WTC11 (cell line): ENCODE measurements at regions of chr2 and their contacts with region 1.

Region 1: DNA sequence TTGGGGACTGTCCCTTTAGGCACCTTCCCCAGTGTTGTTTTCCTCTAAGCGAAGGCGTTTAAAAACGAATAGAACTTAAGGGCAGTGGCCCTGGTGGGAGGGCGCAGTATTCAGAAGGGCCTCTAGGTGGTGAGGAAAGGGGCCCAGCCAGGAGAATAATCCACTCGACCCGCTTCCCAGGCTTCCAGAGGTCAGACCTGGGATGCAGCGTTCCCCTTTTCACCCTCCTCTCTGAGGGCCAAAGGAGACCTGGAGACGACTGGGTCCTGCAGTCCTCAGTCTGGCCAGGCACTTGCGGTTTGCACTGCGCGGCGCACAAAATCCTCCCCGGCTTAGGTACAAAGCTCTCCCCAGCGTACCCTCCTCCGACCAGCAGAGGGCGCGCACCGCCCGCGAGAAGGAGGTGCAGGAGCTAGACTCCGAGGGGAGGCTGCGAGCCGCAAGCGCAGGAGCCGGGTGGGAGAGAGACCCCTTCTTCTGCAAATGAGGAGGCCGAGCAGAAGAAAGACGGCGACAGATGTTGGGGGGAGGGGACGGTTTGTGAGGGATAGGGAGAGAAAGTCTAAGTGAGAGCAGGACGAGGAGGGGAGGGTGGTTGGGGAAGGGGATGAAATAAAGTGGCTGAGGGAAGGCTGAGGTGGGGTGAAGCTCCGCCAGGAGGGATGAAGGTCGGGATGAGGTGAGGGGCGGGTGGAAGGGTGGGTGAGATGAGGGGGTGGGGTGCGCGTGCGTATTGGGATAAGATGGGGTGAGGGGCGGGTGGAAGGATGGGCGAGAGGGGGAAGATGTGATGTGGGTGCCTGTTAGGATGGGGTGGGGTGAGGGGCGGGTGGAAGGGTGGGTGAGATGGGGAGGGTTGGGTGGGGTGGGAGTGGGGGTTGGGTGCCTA is 4.9 kb downstream of the FEV start:
- DNase-seq: peak; percentile 96
- ATAC-seq: peak; percentile 80
- H3K4me3 Mint-ChIP-seq: peak overlapping the region; percentile 60
- H3K27ac Mint-ChIP-seq: no peak overlapping the region
- H3K4me1 Mint-ChIP-seq: peaks cover 25% of the 10 kb centered on the region
- H3K27me3 Mint-ChIP-seq: peaks cover 99% of the 10 kb centered on the region
- CTCF ChIP-seq: peak; percentile 74; the same call in 1 of the 2 replicates

Region 2: GRCh38 chr2:218852911-218853667 is 127.0 kb before region 1 on chr2:
- CTCF ChIA-PET with region 1: interaction called, 13 read pairs
- POLR2A ChIA-PET with region 1: no interaction called
- DNase-seq: peak; percentile 83
- ATAC-seq: peak; percentile 80
- H3K4me3 Mint-ChIP-seq: no peak overlapping the region
- H3K27ac Mint-ChIP-seq: no peak overlapping the region
- H3K4me1 Mint-ChIP-seq: peaks cover 37% of the 10 kb centered on the region
- H3K27me3 Mint-ChIP-seq: peaks cover 60% of the 10 kb centered on the region
- CTCF ChIP-seq: peak; percentile 87

Region 3: DNA sequence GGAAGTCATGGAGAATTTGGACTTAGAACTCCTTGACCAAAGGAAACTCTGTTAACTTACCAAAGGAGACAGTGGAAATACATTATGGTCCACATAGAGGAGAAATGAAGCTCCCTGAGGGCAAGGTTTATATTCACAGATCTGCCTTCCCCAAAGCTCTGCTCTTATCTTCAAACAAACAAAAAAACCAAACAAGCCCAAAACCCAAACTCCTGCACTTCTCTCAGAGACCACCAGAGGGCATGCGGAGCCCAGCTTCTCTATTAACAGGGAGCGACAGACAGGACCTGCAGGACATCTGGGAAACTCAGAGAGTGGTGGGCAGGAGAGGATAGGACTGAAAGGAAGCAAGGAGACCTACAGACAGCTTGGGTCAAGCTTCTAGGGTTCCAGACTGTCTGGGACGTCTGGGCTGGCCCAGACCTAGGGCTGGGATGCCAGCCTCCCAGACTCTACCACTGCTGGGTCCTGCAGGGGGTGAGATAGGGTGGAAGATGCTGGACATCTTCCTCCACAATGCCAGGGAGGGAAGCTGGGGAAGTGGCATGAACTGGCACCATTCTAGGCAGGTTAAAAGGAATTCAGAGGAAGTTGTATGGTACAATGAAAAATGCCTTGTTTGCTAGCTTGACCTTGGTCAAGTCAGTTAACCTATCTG is 103.4 kb before region 1 on chr2:
- CTCF ChIA-PET with region 1: interaction called, 98 read pairs
- POLR2A ChIA-PET with region 1: no interaction called
- DNase-seq: peak; percentile 81
- ATAC-seq: peak; percentile 18
- H3K4me3 Mint-ChIP-seq: no peak overlapping the region
- H3K27ac Mint-ChIP-seq: no peak overlapping the region
- H3K4me1 Mint-ChIP-seq: peaks cover 33% of the 10 kb centered on the region
- H3K27me3 Mint-ChIP-seq: peaks cover 97% of the 10 kb centered on the region
- CTCF ChIP-seq: peak; percentile 88

Region 4: DNA sequence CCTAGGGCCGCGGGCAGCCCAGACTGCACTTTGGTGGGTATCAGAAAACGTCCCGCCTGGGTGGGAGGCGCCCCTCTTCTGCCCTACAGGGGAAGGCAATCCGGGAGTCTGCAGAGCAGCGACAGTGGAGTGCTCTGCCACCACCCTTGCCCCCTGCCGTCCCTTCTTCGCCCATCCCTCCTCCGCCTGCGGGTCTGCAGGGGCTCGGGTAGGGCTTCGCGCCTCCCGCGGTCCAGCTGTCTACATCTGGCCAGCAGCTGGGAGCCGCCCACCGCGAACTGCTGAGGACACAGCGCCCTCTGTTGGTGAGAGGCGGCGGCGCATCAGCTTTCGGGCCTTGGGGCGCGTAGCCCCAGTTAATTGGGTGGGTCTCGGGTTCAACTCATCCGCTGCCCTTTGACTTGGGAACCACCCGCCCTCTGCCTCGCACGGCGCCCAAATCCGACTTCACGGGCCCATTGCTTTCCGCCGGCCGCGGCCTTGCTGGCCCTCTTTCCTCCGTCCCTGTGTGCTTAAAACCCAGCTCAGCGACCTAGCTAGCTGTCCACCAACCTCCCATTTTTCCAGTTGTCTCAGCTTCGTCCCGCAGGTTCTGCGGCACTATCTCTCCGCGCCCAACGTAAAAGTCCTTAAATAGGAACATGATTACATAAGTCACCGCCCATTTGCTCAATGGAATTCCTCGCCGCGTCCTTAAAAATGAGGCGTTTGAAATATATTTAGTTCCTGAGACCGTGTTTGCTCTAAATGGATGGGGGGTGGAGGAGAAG is 81.8 kb before region 1 on chr2:
- CTCF ChIA-PET with region 1: interaction called, 76 read pairs
- POLR2A ChIA-PET with region 1: no interaction called
- DNase-seq: peak; percentile 94
- ATAC-seq: peak; percentile 72
- H3K4me3 Mint-ChIP-seq: peak overlapping the region; percentile 49
- H3K27ac Mint-ChIP-seq: no peak overlapping the region
- H3K4me1 Mint-ChIP-seq: peaks cover 24% of the 10 kb centered on the region
- H3K27me3 Mint-ChIP-seq: peaks cover 99% of the 10 kb centered on the region
- CTCF ChIP-seq: peak; percentile 98

Region 5: DNA sequence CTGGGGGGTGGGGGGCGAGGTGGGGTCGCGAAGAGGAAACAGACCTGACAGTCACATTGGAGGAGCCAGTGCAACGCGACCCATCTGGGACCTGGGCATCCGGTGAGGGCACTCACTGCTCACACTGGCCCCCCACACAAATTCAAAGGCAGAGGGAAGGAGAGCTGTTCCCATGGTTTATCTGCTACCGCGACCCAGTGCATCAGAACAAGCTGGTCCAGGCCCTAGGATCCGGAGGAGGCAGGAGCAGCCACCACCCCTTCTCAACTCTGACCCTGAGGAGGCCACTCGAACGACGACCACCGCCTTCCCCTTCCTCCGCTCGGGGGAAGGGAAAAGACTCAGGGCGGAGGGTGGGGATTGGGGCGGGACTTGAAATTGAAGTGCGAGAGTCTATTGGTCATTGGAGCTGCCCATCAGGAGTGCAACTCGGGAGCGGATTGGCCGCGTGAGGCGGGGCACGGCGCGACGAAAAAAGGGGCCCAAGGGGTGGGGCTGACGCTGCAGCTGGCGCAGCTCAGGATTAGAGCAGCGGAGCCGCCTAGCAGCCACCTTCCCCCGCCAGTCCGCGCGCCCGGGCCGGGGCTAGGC is 20.9 kb before region 1 on chr2 and contains the start of gene CDK5R2:
- CTCF ChIA-PET with region 1: interaction called, 116 read pairs
- POLR2A ChIA-PET with region 1: no interaction called
- DNase-seq: peak; percentile 96
- ATAC-seq: peak; percentile 82
- H3K4me3 Mint-ChIP-seq: peak within 1 kb of the TSS; percentile 84
- H3K27ac Mint-ChIP-seq: no peak within 1 kb of the TSS
- H3K4me1 Mint-ChIP-seq: peaks cover 27% of the 10 kb centered on the region
- H3K27me3 Mint-ChIP-seq: peaks cover 95% of the 10 kb centered on the region
- CTCF ChIP-seq: no peak
- total RNA-seq, gene CDK5R2: 0.16 to 0.46 TPM (median 0.26 TPM) in 3 replicates

Region 6: GRCh38 chr2:219057709-219058540 is 77.8 kb after region 1 on chr2:
- CTCF ChIA-PET with region 1: interaction called, 35 read pairs
- POLR2A ChIA-PET with region 1: no interaction called
- DNase-seq: peak; percentile 91
- ATAC-seq: peak; percentile 82
- H3K4me3 Mint-ChIP-seq: peak overlapping the region; percentile 58
- H3K27ac Mint-ChIP-seq: no peak overlapping the region
- H3K4me1 Mint-ChIP-seq: peaks cover 25% of the 10 kb centered on the region
- H3K27me3 Mint-ChIP-seq: peaks cover 96% of the 10 kb centered on the region
- CTCF ChIP-seq: peak; percentile 80

Region 7: GRCh38 chr2:219155054-219155644 is 175.1 kb after region 1 on chr2:
- CTCF ChIA-PET with region 1: interaction called, 21 read pairs
- POLR2A ChIA-PET with region 1: no interaction called
- DNase-seq: peak; percentile 24
- ATAC-seq: peak; percentile 40
- H3K4me3 Mint-ChIP-seq: no peak overlapping the region
- H3K27ac Mint-ChIP-seq: no peak overlapping the region
- H3K4me1 Mint-ChIP-seq: peaks cover 10% of the 10 kb centered on the region
- H3K27me3 Mint-ChIP-seq: no peaks in the 10 kb centered on the region
- CTCF ChIP-seq: peak; percentile 53